CD14-positive monocyte (primary cell): ENCODE measurements at regions of chr16 and their contacts with region 1.

Region 1: DNA sequence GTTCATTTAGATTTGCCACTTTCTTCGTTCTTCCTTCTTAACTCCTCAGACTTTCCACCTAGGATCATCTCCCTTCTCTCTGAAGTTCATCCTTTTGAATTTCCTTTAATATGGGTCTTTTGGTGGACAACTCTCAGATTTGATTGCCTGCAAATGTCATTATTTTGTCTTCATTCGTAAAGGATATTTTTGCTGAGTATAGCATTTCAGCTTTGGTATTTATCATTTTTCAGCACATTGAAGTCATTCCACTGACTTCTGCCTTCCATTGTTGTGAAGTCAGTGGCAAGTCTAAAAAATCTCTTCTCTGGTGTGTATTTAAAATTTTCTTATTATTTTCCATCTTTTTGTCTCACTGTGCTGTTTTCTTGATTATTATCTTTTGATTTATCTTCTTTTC is 45.4 kb downstream of the GAN start:
- DNase-seq: no peak
- H3K4me3 ChIP-seq: no peak overlapping the region
- H3K4me3 Mint-ChIP-seq: no peak overlapping the region
- H3K27ac ChIP-seq: no peak overlapping the region
- H3K27ac Mint-ChIP-seq: no peak overlapping the region
- H3K4me1 ChIP-seq: no peaks in the 10 kb centered on the region
- H3K4me1 Mint-ChIP-seq: no peaks in the 10 kb centered on the region
- H3K27me3 ChIP-seq: no peaks in the 10 kb centered on the region
- H3K27me3 Mint-ChIP-seq: no peaks in the 10 kb centered on the region
- CTCF ChIP-seq: no peak

Region 2: GRCh38 chr16:81324808-81325207 is 35.3 kb before region 1 on chr16:
- intact Hi-C with region 1: no loop called
- DNase-seq: no peak
- H3K4me3 ChIP-seq: no peak overlapping the region
- H3K4me3 Mint-ChIP-seq: no peak overlapping the region
- H3K27ac ChIP-seq: no peak overlapping the region
- H3K27ac Mint-ChIP-seq: no peak overlapping the region
- H3K4me1 ChIP-seq: no peaks in the 10 kb centered on the region
- H3K4me1 Mint-ChIP-seq: no peaks in the 10 kb centered on the region
- H3K27me3 ChIP-seq: no peaks in the 10 kb centered on the region
- H3K27me3 Mint-ChIP-seq: peaks cover 0 to 1% (median 0%) of the 10 kb centered on the region in 3 donors
- CTCF ChIP-seq: no peak

Region 3: GRCh38 chr16:81349579-81349978 is 10.6 kb before region 1 on chr16:
- intact Hi-C with region 1: no loop called
- DNase-seq: no peak
- H3K4me3 ChIP-seq: no peak overlapping the region
- H3K4me3 Mint-ChIP-seq: no peak overlapping the region
- H3K27ac ChIP-seq: no peak overlapping the region
- H3K27ac Mint-ChIP-seq: no peak overlapping the region
- H3K4me1 ChIP-seq: no peaks in the 10 kb centered on the region
- H3K4me1 Mint-ChIP-seq: no peaks in the 10 kb centered on the region
- H3K27me3 ChIP-seq: no peaks in the 10 kb centered on the region
- H3K27me3 Mint-ChIP-seq: peaks cover 0 to under 1% (median 0%) of the 10 kb centered on the region in 3 donors
- CTCF ChIP-seq: no peak

Region 4: DNA sequence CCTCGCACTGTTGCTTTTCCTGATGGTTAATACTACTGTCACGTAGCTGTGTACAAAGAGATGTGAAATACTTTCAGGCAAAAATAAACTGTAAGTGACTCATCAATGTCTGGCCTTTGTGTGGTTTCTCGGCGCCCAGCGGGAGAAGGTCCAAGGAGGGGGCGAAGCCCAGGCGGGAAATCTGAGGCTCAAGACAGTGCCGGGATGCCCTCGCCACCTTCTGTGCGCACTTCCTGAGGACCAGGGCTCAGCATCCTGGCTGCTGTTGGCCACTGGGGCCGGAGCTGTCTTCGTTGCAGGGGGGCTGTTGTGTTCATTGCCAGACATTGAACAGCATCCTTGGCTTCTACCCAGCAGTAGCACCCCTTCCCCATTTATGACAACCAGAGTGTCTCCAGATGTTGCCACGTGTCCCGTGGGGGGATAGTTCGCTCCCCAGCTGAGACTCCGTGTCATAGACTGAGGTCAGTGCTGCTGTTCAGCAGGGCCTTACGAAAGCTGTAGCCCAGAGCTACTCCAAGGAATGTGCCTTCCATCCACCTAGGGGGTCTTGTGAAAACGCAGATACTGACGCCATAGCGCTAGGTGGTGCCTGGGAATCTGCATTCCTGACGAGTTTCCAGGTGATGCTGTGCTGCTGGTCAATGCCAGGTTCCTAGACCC is 351.7 kb after region 1 on chr16:
- intact Hi-C with region 1: loop called in 1 of 2 experiments (anchors 5 kb)
- DNase-seq: peak in 2 of 3 donors; percentile 12 to 25
- H3K4me3 ChIP-seq: no peak overlapping the region
- H3K4me3 Mint-ChIP-seq: no peak overlapping the region
- H3K27ac ChIP-seq: no peak overlapping the region
- H3K27ac Mint-ChIP-seq: peak overlapping the region in 3 of 7 donors; percentile 17 to 39 (median 27)
- H3K4me1 ChIP-seq: peaks cover 0 to 3% of the 10 kb centered on the region in 2 donors
- H3K4me1 Mint-ChIP-seq: peaks cover 13% of the 10 kb centered on the region
- H3K27me3 ChIP-seq: no peaks in the 10 kb centered on the region
- H3K27me3 Mint-ChIP-seq: peaks cover 0 to 5% (median 1%) of the 10 kb centered on the region in 3 donors
- CTCF ChIP-seq: no peak

Region 5: DNA sequence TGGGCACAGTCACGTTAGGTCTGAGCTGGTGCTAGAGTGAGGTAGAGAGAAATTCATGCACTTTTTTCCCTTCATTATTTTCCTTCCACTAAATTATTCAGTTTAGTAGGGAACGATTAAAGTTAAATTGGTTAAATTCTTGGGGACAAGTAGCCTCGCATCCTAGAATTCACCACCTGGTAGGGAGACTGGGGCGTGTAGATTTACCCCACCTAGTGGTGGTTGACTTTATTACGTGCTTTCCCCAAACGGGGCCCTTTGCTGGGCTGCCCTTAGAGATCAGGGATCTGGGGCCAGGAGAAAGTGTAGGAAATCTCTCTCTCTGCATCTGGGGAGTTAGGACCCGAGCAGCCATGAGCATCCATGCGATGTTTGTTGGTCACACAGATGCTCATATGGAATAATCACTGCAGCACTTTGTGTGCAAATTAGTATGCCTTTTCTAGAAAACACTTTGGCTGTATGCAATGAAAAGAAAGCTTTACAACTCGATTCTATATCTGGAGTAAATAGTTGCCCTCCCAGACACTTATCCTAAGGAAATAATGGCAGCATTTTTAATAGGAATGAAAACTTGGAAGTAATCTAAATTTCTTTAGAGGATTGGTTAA is 525.9 kb after region 1 on chr16:
- intact Hi-C with region 1: loop called in 1 of 2 experiments (anchors 5 kb)
- DNase-seq: peak; percentile 8 to 33 (median 18)
- H3K4me3 ChIP-seq: no peak overlapping the region
- H3K4me3 Mint-ChIP-seq: no peak overlapping the region
- H3K27ac ChIP-seq: no peak overlapping the region
- H3K27ac Mint-ChIP-seq: no peak overlapping the region
- H3K4me1 ChIP-seq: no peaks in the 10 kb centered on the region
- H3K4me1 Mint-ChIP-seq: no peaks in the 10 kb centered on the region
- H3K27me3 ChIP-seq: no peaks in the 10 kb centered on the region
- H3K27me3 Mint-ChIP-seq: no peaks in the 10 kb centered on the region
- CTCF ChIP-seq: peak; percentile 82